Panc1 (cell line): ENCODE measurements at regions of chr6 and their contacts with region 1.

Region 1: DNA sequence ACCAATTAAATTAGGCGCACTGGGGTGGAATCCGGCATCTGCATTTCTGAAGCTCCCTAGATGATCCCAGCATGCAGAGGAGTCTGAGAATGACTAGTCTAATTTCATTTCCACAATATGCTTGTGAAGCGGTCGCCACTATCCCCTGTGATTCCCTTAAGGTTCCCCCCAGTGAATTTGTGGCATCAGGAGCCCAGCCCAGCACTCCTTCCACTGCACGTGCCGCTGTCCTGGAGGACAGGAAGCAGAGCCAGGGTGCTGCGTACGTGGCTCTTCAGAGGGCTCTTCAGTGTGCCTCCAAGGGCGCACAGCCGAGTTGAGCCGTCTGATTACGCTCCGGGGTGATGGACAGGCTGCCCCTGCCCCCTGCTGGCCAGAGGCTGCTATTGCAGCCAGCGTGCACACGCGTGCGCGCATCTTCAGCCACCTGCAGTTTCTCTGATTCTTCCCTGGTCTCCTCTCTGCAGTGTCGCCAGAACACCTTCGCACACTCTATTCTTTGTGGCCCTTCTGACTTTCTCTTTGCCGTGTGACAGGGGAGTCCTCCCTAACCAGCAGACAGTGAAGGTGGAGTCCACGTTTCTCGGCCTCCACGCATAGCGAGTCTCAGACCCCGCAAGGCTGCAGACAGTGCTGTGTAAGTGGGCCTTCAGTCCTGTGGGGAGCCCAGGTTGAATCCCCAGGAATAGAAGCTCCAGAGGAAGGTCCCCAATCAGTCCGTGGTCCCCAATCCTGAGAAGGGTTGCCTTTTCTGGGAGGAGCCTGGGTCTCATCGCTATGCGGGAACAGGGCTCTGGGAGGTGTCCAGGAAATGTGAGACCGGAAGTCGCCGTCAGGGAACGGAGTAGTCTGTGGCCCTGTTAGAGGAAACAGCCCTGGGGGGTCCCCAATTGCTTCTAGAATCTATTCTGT is 16.5 kb upstream of the NCR2 start:
- DNase-seq: peak; percentile 57
- ATAC-seq: peak; percentile 95
- H3K4me3 ChIP-seq: peak overlapping the region; percentile 18 to 44
- H3K27ac ChIP-seq: no peak overlapping the region
- H3K4me1 ChIP-seq: peaks cover 13% of the 10 kb centered on the region
- H3K27me3 ChIP-seq: peaks cover 37% of the 10 kb centered on the region
- CTCF ChIP-seq: peak; percentile 99

Region 2: GRCh38 chr6:41092421-41093140 is 226.3 kb before region 1 on chr6:
- CTCF ChIA-PET with region 1: no interaction called
- POLR2A ChIA-PET with region 1: no interaction called
- in situ Hi-C with region 1: no loop called
- intact Hi-C with region 1: loop called (anchors 5 kb)
- DNase-seq: no peak
- ATAC-seq: no peak
- H3K4me3 ChIP-seq: no peak overlapping the region
- H3K27ac ChIP-seq: no peak overlapping the region
- H3K4me1 ChIP-seq: no peaks in the 10 kb centered on the region
- H3K27me3 ChIP-seq: no peaks in the 10 kb centered on the region
- CTCF ChIP-seq: peak; percentile 64; the same call in 1 of the 2 replicates